Right lobe of liver (tissue), 6 donors: ENCODE measurements at regions of chr4 and their contacts with region 1.

Region 1: DNA sequence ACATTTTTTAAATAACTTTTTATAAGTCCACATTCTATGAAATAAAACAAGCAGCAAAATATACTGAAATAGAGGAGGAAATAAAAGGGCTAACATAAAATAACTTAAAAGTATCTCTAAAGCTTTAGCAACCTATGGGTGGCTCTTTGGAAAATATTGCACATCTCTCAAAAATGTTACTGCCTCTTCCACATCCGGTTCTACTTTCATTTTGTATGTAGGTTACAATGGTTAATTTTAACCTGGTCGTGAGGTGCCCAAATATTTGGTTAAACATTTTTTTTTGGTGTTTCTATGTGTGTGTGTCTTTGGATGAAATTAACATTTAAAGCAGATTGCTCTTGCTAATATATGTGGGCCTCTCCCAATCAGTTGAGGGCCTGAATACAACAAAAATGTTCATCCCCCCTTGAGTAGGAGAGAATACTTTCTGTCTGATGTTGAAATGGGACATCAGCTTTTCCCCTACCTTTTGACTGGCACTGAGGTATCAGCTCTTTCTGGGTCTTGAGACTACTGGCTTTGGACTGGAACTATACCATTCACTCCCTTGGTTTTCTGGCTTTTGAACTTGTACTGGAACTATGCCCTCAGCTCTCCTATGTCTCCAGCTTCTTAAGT is 353.0 kb downstream of the ADAM29 start:
- DNase-seq: no peak
- ATAC-seq: no peak
- H3K4me3 ChIP-seq: no peak overlapping the region
- H3K27ac ChIP-seq: no peak overlapping the region
- H3K4me1 ChIP-seq: no peaks in the 10 kb centered on the region
- H3K27me3 ChIP-seq: no peaks in the 10 kb centered on the region
- CTCF ChIP-seq: no peak
- POLR2A ChIP-seq: no peak

Region 2: DNA sequence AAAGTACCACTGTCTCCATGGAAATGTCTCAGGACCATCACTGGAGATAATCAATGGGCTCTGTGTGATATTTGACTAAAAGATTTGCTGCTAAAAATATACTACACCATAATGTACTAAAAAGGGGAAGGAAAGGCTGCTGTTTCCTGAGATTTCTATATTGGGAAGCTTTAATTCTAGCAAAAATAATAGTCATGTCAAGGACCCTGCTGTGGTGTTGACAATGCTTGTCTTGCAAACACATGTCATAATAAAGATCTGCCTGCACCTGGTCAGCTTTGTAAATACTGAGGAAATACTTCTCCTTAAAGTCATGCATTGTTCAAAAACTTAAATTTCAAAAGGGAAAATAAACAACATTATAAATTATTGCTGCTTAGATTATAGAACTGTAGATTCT is 123.1 kb after region 1 on chr4:
- intact Hi-C with region 1: no loop called
- DNase-seq: no peak
- ATAC-seq: no peak
- H3K4me3 ChIP-seq: no peak overlapping the region
- H3K27ac ChIP-seq: no peak overlapping the region
- H3K4me1 ChIP-seq: no peaks in the 10 kb centered on the region
- H3K27me3 ChIP-seq: no peaks in the 10 kb centered on the region
- CTCF ChIP-seq: no peak
- POLR2A ChIP-seq: no peak

Region 3: DNA sequence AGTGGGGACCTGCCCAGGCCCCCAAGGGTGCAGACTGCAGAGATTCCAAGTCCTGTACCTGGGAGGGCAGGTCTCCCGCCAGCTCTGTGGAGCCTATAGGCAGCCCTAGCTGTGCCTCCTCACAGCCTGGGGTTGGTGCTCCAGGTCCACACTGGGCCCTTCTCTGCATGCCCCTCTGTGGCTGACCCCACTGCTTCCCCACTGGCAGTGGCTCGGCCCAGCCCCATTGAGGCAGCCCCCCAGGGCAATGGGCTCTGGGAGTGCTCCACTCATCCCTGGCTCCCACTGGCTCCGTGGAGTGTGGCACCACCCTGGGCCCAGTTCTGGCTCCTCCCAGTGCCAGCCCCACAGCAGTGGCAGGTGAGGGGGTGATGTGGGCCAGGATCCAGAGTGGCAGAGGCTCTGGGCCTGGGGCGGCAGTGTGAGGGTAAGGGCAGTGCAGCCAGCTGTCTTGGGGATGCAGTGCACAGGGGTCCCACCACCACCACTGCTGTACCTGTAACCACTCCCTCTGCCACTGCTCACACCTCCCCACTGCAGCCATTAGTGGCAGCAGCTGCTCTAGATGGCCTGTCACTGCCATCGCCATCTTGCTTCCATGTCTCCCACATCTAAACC is 228.7 kb after region 1 on chr4:
- intact Hi-C with region 1: loop called in 1 of 2 experiments (anchors 10 kb)
- DNase-seq: peak in 1 of 3 donors; percentile 50
- ATAC-seq: peak in 1 of 4 donors; percentile 36
- H3K4me3 ChIP-seq: no peak overlapping the region
- H3K27ac ChIP-seq: no peak overlapping the region
- H3K4me1 ChIP-seq: no peaks in the 10 kb centered on the region
- H3K27me3 ChIP-seq: no peaks in the 10 kb centered on the region
- CTCF ChIP-seq: no peak
- POLR2A ChIP-seq: no peak